RWPE1 (cell line): ENCODE measurements at regions of chr2 and their contacts with region 1.

Region 1: DNA sequence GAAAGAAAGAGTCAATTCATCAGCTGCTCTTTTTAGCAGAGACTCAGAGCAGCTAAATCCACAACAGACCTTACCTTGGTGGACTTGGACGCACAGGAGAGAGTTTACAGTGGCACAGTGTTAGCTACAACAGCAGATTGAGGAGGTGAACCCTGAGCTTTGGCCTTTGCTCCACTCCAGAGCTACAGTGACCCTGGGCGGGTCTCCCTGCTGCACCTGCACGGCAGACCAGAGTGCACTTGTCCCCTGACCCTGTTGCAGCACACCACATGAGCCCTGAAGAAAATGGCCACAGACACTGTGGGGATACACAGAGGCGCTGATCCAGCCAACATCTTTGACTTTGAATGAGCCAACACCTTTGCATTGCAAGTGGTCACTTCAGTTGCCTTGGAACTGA is 11.0 kb downstream of the SLC19A3 start:
- DNase-seq: no peak
- H3K27ac ChIP-seq: no peak overlapping the region
- CTCF ChIP-seq: no peak

Region 2: DNA sequence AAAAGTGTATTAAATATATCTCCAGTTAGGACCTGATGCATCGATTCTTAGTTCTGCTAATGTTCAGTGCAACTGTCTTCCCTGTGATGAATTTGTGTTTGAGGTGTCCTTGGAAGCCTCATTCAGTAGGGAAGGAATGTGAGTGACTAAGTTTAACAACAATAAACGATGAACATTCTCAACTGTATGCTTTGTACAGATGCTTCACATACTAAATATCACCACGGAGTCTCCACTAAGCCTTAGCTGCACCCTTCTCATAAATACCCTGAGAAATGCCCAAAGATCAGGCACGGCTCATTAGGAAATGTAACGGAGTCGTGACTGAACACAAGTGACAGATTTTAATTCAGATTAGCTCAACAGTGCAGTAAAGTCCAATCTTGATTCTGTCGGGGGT is 259.3 kb before region 1 on chr2:
- CTCF ChIA-PET with region 1: no interaction called
- POLR2A ChIA-PET with region 1: no interaction called
- DNase-seq: no peak
- H3K27ac ChIP-seq: no peak overlapping the region
- CTCF ChIP-seq: no peak

Region 3: DNA sequence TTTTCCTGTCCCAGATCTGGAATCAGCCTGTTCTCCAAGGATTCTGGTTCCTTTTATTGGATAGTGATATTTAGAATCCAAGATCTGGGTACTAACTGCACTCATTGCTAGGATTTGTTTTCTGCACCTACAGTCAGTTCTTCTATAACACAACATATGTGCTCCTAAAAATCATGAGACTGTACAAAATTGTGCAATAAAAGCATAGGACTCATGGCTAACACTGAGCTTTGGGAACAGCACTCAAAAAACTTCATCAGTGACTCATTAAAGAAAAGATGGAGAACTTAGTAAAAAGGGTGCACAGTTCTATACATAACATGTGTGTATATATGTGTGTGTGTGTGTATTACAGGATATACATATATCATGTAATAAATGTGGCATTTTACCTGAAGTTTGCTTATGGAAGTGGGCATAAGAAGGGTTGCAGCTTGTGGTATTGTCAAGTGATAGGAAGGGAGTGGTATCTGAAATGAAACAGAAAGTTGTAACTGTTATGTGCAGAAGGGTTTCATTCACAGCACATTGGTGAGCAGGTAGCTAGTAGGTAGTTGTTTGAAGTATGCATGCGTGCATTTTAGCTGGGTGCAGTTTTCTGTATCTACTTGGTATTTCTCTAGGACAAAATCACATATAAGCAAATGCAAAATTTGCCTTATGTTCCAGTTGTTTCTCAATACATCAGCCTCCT is 114.0 kb before region 1 on chr2:
- CTCF ChIA-PET with region 1: no interaction called
- POLR2A ChIA-PET with region 1: no interaction called
- DNase-seq: no peak
- H3K27ac ChIP-seq: no peak overlapping the region
- CTCF ChIP-seq: no peak

Region 4: GRCh38 chr2:227717687-227718567 is 11.1 kb after region 1 on chr2 and contains the start of gene SLC19A3:
- CTCF ChIA-PET with region 1: no interaction called
- POLR2A ChIA-PET with region 1: interaction called, 13 read pairs
- DNase-seq: peak; percentile 68
- H3K27ac ChIP-seq: no peak within 1 kb of the TSS
- CTCF ChIP-seq: no peak